Common myeloid progenitor, CD34-positive (primary cell): ENCODE measurements at regions of chr9 and their contacts with region 1.

Region 1: GRCh38 chr9:121538246-121538645 is 38.6 kb upstream of the GGTA1 start:
- DNase-seq: peak; percentile 57 to 65 (median 63)
- H3K4me3 ChIP-seq: no peak overlapping the region
- H3K27ac ChIP-seq: no peak overlapping the region
- H3K4me1 ChIP-seq: peaks cover 0 to 8% (median 5%) of the 10 kb centered on the region in 4 experiments
- H3K27me3 ChIP-seq: no peaks in the 10 kb centered on the region

Region 2: DNA sequence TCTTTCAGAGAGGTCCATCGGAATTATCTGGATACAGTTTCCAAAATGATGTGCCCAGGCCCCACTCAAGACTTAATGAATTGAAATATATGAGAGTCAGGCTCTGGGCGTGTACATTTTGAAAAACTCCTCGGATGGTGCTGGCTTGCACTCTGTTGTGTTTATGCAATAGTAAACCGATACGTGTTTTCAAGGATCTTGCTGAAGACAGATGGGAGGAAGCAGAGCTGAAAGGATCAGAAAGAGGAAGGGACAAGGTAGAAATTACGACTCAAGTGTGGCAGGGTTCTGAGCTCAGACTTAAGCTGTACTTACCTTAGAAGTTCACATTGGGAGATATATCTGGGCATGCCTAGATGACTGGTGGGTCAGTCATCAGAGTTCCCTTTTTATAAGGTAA is 154.5 kb before region 1 on chr9:
- CTCF ChIA-PET with region 1: no interaction called
- POLR2A ChIA-PET with region 1: no interaction called
- DNase-seq: peak in 2 of 3 donors; percentile 51 to 59
- H3K4me3 ChIP-seq: peak overlapping the region in 1 of 7 experiments; percentile 20
- H3K27ac ChIP-seq: no peak overlapping the region
- H3K4me1 ChIP-seq: peaks cover 0 to 20% (median 2%) of the 10 kb centered on the region in 4 experiments
- H3K27me3 ChIP-seq: no peaks in the 10 kb centered on the region

Region 3: DNA sequence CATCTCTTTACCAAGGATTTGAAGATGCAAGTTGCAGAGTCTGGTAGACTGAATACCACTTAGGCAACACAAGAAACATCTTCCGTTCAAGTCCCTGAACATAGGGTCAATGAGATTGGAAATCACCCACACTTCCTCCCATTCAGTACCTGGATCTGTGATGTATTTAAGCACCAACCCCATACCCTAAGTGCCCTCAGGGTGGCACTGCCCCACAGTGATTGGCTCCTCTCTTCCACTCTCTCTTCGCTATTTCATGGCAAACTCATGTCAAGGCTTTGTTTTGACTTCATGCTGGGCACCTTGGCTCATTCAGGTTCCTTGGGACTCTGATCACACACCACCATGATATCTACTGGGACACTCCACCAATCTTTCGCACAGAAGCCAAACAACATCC is 92.3 kb before region 1 on chr9:
- CTCF ChIA-PET with region 1: interaction called, 68 read pairs
- POLR2A ChIA-PET with region 1: interaction called, 4 read pairs
- DNase-seq: peak; percentile 66 to 73 (median 71)
- H3K4me3 ChIP-seq: no peak overlapping the region
- H3K27ac ChIP-seq: no peak overlapping the region
- H3K4me1 ChIP-seq: peaks cover 6 to 17% (median 15%) of the 10 kb centered on the region in 4 experiments
- H3K27me3 ChIP-seq: peaks cover 0 to 19% (median 6%) of the 10 kb centered on the region in 5 experiments

Region 4: GRCh38 chr9:121455527-121456239 is 82.6 kb before region 1 on chr9:
- CTCF ChIA-PET with region 1: interaction called, 68 read pairs
- POLR2A ChIA-PET with region 1: no interaction called
- DNase-seq: peak; percentile 79 to 94 (median 92)
- H3K4me3 ChIP-seq: peak overlapping the region in 1 of 7 experiments; percentile 28
- H3K27ac ChIP-seq: no peak overlapping the region
- H3K4me1 ChIP-seq: peaks cover 5 to 38% (median 32%) of the 10 kb centered on the region in 4 experiments
- H3K27me3 ChIP-seq: no peaks in the 10 kb centered on the region